Activated CD8-positive, alpha-beta T cell treated with anti-CD3 and anti-CD28 coated beads for 36 hours (primary cell): ENCODE measurements at regions of chr4 and their contacts with region 1.

Region 1: DNA sequence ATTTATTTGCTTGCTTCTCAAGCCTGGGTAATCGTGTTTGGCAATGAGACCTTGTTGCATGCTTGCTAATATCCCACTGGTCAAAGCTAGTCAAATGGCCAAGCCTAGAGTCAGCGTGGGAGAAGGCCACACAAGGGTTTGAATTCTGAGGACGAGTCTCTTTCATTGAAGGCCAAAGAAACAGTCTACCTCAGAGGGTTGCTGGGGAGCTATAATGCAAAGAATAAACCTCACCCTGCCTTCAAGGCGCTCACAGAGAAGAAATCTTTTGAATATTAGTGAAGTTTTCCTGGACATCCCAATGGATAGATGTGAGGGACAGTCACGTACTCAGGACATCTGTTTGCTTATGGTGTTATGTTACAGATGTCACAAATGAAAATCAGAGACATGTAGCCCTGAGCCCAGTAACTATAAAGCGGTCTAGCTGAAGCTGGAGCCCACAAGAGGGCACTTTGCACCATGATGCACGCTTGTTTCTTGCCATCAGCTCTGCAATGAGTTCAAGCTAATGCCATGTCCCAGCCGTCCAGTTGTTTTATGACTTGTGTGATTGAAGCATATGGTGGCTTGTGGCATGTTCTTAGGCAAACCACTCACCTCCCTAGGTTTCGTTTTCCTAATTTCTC is 1.1 kb upstream of the TLR3 start:
- DNase-seq: peak; percentile 61
- ATAC-seq: peak; percentile 89
- H3K4me3 Mint-ChIP-seq: peak overlapping the region; percentile 70
- H3K27ac Mint-ChIP-seq: no peak overlapping the region
- H3K4me1 Mint-ChIP-seq: peaks cover 13% of the 10 kb centered on the region
- H3K27me3 Mint-ChIP-seq: peaks cover 4% of the 10 kb centered on the region
- CTCF ChIP-seq: peak; percentile 34

Region 2: GRCh38 chr4:186137196-186137794 is 69.4 kb after region 1 on chr4:
- CTCF ChIA-PET with region 1: interaction called, 27 read pairs
- POLR2A ChIA-PET with region 1: no interaction called
- intact Hi-C with region 1: loop called (anchors 1 kb)
- DNase-seq: no peak
- ATAC-seq: no peak
- H3K4me3 Mint-ChIP-seq: no peak overlapping the region
- H3K27ac Mint-ChIP-seq: no peak overlapping the region
- H3K4me1 Mint-ChIP-seq: peaks cover 3% of the 10 kb centered on the region
- H3K27me3 Mint-ChIP-seq: no peaks in the 10 kb centered on the region
- CTCF ChIP-seq: peak; percentile 74